ENCODE measurements at regions of chr16 and their contacts with region 1.

Region 1: GRCh38 chr16:54407596-54407995 is 121.0 kb upstream of the IRX3 start:
- DNase-seq: peak; percentile 58
- H3K4me3 ChIP-seq: no peak overlapping the region
- H3K27ac ChIP-seq: no peak overlapping the region
- H3K4me1 ChIP-seq: peaks cover 8% of the 10 kb centered on the region
- H3K27me3 ChIP-seq: no peaks in the 10 kb centered on the region
- CTCF ChIP-seq: no peak

Region 2: GRCh38 chr16:54425681-54426552 is 18.3 kb after region 1 on chr16:
- CTCF ChIA-PET with region 1: no interaction called
- dilution Hi-C with region 1: no loop called
- in situ Hi-C with region 1: no loop called
- intact Hi-C with region 1: loop called (anchors 2 kb)
- DNase-seq: peak; percentile 25
- H3K4me3 ChIP-seq: no peak overlapping the region
- H3K27ac ChIP-seq: no peak overlapping the region
- H3K4me1 ChIP-seq: peaks cover 44% of the 10 kb centered on the region
- H3K27me3 ChIP-seq: peaks cover 2% of the 10 kb centered on the region
- CTCF ChIP-seq: no peak

Region 3: DNA sequence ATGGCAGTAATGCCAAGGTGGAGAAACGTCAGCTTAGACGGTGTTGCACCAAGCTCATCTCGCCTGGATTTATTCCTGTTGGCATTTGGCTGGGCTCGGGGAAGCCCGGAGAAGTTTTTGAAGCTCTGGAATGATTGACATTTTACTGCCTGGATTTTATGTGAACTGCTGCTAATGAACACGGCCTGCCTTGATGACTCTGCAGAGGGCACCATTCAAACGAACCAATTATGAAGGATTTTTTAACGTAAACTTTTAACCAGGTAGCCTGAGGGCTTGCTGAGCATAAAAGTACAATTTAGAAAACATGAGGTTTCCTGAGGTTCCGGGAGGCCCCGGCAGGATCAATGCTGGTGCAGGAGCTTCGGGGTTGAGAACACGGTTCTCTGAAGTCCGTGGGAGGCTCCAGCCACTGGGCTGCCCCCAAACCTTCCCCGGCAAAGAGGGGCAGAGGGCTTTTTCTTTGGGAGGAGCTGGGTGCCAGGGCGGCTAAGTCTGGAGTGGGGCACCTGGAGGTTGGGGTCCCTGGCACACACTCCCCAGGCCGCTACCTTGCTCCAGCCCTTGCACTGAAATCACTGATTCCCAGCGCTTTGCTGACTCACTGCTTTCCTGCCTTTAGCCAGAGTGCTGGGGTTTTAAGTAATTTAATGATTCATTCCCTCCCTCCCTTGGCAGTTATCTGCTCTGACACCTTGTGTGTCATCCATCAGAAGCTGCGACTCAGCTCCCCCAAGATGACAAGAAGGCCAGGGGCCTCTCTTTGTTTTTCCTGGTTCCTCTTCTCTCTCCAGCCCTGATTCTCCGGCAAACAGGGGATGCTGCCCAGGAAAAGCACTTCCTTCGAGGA is 40.2 kb after region 1 on chr16:
- CTCF ChIA-PET with region 1: no interaction called
- dilution Hi-C with region 1: no loop called
- in situ Hi-C with region 1: no loop called
- intact Hi-C with region 1: loop called (anchors 5 kb)
- DNase-seq: peak; percentile 84
- H3K4me3 ChIP-seq: no peak overlapping the region
- H3K27ac ChIP-seq: no peak overlapping the region
- H3K4me1 ChIP-seq: peaks cover 21% of the 10 kb centered on the region
- H3K27me3 ChIP-seq: no peaks in the 10 kb centered on the region
- CTCF ChIP-seq: no peak

Measured in mammary epithelial cell (primary cell).